ENCODE measurements at regions of chr17 and their contacts with region 1.

Region 1: DNA sequence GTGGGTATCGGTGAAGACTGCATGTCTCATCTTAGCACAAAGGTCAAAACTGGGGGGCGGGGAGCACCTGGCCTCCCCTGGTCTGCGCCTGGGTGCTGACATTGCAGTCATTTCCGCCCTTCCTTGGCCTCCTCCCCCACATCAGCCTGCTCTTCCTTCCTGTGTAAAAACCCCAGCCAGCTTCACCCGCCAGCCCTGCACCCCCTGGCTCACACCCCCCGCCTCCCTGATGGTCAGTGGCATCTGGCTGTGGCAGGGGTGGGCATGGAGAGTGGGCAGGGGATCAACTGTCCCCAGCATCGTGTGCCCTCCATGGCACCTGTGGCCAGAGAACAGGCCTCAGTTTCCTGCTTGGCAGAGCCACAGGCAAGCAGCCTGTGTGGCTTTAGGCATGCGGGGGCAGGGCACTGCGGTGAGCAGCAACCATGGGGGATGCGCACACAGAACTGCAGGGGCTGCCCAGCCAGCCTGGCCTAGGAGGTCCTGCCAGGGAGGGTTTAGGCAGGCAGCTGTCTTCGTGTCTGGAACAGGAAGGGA is 26.5 kb upstream of the LASP1NB start:
- DNase-seq: peak; percentile 59 to 94 (median 88)
- ATAC-seq: peak; percentile 81
- H3K4me3 ChIP-seq: peak overlapping the region; percentile 25 to 49
- H3K4me3 Mint-ChIP-seq: peak overlapping the region; percentile 77
- H3K27ac ChIP-seq: peak overlapping the region; percentile 56 to 94
- H3K27ac Mint-ChIP-seq: peak overlapping the region; percentile 95
- H3K4me1 ChIP-seq: peaks cover 78% of the 10 kb centered on the region
- H3K4me1 Mint-ChIP-seq: peaks cover 73% of the 10 kb centered on the region
- H3K27me3 ChIP-seq: no peaks in the 10 kb centered on the region
- H3K27me3 Mint-ChIP-seq: no peaks in the 10 kb centered on the region
- CTCF ChIP-seq: no peak

Region 2: DNA sequence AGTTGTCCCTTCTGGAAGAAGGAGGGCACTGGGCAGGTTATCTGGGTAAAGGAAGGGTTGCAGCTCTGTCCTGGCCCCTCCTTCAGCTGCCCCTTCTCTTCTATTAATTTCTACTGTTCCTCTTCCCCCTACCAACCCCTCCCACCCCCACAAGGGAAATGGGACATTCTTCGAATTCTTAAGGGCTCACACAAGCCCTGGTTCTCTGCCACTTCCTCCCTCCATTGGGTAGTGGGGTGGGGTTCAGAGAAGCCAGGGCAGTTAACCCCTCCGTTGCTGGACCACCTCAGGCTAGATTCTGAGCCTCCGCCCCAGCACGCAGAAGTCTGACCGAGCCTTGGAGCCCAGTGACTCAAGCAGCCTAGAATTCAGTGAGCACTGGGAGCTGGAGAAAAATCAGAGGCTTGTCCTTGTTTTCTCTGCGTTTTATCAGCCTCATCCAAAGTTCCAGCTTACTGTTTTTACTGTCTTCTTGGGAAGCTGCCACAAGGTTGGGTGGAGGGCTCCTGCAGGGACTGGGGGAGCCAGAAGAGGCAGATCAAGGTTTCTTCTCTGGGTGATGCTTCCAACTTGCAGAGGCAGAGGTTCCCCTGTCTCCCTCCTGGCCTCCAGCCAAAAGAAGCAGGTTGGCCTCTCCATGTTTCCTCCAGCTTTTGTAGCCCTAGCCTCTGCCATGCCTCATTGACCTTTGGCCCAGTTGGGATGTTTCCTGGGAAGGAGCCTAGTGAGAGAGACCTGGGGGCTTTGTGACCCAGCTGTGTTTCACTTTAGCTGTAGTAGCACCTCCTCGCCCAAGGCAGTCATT is 18.8 kb before region 1 on chr17:
- CTCF ChIA-PET with region 1: interaction called, 8 read pairs
- POLR2A ChIA-PET with region 1: interaction called, 7 read pairs
- intact Hi-C with region 1: loop called in 1 of 2 experiments (anchors 2 kb)
- DNase-seq: peak in 2 of 9 experiments; percentile 29 to 59
- ATAC-seq: peak; percentile 48
- H3K4me3 ChIP-seq: peak overlapping the region; percentile 1 to 46
- H3K4me3 Mint-ChIP-seq: peak overlapping the region; percentile 66
- H3K27ac ChIP-seq: peak overlapping the region; percentile 34 to 57
- H3K27ac Mint-ChIP-seq: peak overlapping the region; percentile 88
- H3K4me1 ChIP-seq: peaks cover 89% of the 10 kb centered on the region
- H3K4me1 Mint-ChIP-seq: peaks cover 89% of the 10 kb centered on the region
- H3K27me3 ChIP-seq: no peaks in the 10 kb centered on the region
- H3K27me3 Mint-ChIP-seq: no peaks in the 10 kb centered on the region
- CTCF ChIP-seq: no peak

Region 3: GRCh38 chr17:38922538-38923297 is 23.8 kb after region 1 on chr17:
- CTCF ChIA-PET with region 1: interaction called, 16 read pairs
- POLR2A ChIA-PET with region 1: interaction called, 13 read pairs
- intact Hi-C with region 1: no loop called
- DNase-seq: peak in 2 of 9 experiments; percentile 9 to 48
- ATAC-seq: no peak
- H3K4me3 ChIP-seq: no peak overlapping the region
- H3K4me3 Mint-ChIP-seq: no peak overlapping the region
- H3K27ac ChIP-seq: peak overlapping the region in 1 of 2 experiments; percentile 51
- H3K27ac Mint-ChIP-seq: peak overlapping the region; percentile 66
- H3K4me1 ChIP-seq: peaks cover 26% of the 10 kb centered on the region
- H3K4me1 Mint-ChIP-seq: peaks cover 45% of the 10 kb centered on the region
- H3K27me3 ChIP-seq: no peaks in the 10 kb centered on the region
- H3K27me3 Mint-ChIP-seq: no peaks in the 10 kb centered on the region
- CTCF ChIP-seq: no peak

Region 4: DNA sequence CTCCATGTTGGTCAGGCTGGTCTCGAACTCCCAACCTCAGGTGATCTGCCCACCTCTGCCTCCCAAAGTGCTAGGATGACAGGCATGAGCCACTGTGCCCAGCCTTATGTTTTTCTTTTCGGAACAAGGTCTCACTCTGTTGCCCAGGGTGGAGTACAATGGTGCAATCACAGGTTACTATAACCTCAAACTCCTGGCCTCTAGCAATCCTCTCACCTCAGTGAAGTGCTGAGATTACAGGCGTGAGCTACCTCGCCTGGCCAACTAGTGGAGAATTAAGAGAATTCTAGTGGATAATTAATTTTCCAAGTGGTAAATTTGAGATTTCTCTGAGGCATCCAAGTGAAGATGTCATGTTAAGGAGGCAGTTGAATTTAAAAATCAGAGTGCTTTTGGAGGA is 71.2 kb after region 1 on chr17:
- CTCF ChIA-PET with region 1: no interaction called
- POLR2A ChIA-PET with region 1: no interaction called
- intact Hi-C with region 1: no loop called
- DNase-seq: no peak
- ATAC-seq: no peak
- H3K4me3 ChIP-seq: no peak overlapping the region
- H3K4me3 Mint-ChIP-seq: no peak overlapping the region
- H3K27ac ChIP-seq: no peak overlapping the region
- H3K27ac Mint-ChIP-seq: no peak overlapping the region
- H3K4me1 ChIP-seq: peaks cover 9% of the 10 kb centered on the region
- H3K4me1 Mint-ChIP-seq: peaks cover 19% of the 10 kb centered on the region
- H3K27me3 ChIP-seq: no peaks in the 10 kb centered on the region
- H3K27me3 Mint-ChIP-seq: no peaks in the 10 kb centered on the region
- CTCF ChIP-seq: no peak

Measured in CD8-positive, alpha-beta T cell (primary cell).